Spleen (tissue), 13 donors: ENCODE measurements at regions of chr11 and their contacts with region 1.

Region 1: GRCh38 chr11:29333993-29334775 is 682.6 kb downstream of the KCNA4 start:
- DNase-seq: no peak
- H3K4me3 ChIP-seq: no peak overlapping the region
- H3K27ac ChIP-seq: no peak overlapping the region
- H3K4me1 ChIP-seq: no peaks in the 10 kb centered on the region
- H3K27me3 ChIP-seq: no peaks in the 10 kb centered on the region
- CTCF ChIP-seq: peak in 8 of 11 experiments; percentile 7 to 28 (median 22)
- POLR2A ChIP-seq: no peak

Region 2: DNA sequence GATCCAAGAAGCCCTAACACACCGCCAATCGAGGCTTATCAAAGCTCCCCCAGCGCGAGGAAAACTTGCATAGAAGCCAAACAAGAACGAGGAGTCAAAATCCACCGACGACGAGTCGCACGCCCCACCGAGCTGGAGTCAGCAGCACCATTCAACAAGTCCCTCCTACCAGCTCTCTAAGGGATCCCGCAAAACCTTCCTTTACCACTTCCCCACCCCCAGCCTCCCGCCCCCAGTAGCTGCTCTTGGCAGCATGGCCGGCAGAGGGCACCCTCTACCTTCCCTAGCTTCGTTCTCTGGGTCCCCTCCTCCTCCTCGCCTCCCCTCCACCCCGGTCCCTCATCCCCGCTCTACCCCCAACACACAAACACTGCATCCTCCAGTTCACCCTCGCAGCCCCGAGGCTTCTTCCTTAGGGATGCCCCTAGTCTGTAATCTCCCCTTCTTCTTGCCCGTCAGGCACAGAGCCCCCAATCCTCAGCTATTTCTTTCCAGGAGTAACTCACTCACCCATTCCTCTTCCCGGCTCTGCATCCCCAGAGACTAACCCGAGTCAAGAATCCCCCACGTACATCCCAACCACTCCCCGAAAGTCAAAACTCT is 1635.2 kb before region 1 on chr11:
- intact Hi-C with region 1: loop called (anchors 10 kb)
- DNase-seq: peak; percentile 84
- H3K4me3 ChIP-seq: peak overlapping the region in 7 of 8 donors; percentile 13 to 70 (median 47)
- H3K27ac ChIP-seq: no peak overlapping the region
- H3K4me1 ChIP-seq: peaks cover 18 to 38% (median 32%) of the 10 kb centered on the region in 6 donors
- H3K27me3 ChIP-seq: peaks cover 0 to 93% (median 60%) of the 10 kb centered on the region in 7 donors
- CTCF ChIP-seq: peak in 10 of 11 experiments; percentile 10 to 83 (median 68)
- POLR2A ChIP-seq: no peak

Region 3: DNA sequence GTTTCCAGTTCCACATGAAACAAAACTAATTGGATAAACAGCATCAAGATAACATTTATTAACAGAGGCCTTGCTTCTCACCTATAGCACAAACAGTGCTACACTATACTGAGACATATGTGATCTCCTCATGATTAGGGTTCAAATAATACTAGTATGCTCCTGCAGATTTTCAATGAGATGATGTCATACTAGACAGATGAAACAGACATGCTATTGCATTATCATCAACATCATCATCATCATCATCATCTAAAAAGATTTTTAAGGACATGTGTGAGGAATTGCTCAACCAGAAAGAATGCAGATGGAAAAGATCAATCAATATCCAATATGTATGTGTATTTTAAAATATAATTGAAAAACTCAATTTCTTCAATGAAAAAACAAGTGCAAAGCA is 293.7 kb before region 1 on chr11:
- intact Hi-C with region 1: no loop called
- DNase-seq: no peak
- H3K4me3 ChIP-seq: no peak overlapping the region
- H3K27ac ChIP-seq: no peak overlapping the region
- H3K4me1 ChIP-seq: no peaks in the 10 kb centered on the region
- H3K27me3 ChIP-seq: no peaks in the 10 kb centered on the region
- CTCF ChIP-seq: no peak
- POLR2A ChIP-seq: no peak